ENCODE measurements at regions of chr7 and their contacts with region 1.

Region 1: DNA sequence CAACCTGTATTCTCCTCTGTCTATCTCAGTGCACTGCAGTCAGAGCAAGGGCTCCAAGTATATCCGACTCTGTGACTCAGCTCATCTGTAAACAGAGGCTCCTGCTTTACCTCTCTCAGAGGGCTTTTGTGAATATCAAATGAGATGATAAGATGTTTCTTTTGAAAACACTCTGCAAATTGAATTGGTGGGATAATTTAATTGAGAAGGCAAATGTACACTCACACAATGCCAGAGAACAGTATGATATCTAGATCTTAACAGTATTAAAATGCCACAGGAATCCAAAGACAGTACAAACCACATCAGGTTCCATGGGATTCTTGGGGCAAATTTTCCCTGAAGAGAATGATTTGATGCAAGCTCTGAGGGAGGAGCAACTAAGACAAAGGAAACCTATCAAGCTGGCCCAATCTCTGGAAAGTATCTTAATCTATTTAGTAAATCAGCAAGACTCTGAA is 46.0 kb downstream of the DOCK4 start:
- DNase-seq: peak; percentile 57
- ATAC-seq: peak; percentile 77
- H3K4me3 ChIP-seq: peak overlapping the region; percentile 15 to 37 (median 24); a peak in 3 of 6 replicates
- H3K27ac ChIP-seq: peak overlapping the region; percentile 36
- H3K4me1 ChIP-seq: peaks cover 43% of the 10 kb centered on the region
- H3K27me3 ChIP-seq: no peaks in the 10 kb centered on the region
- CTCF ChIP-seq: no peak
- EP300 ChIP-seq: no peak
- POLR2A ChIP-seq: no peak
- RAD21 ChIP-seq: no peak

Region 2: GRCh38 chr7:111953611-111954010 is 206.5 kb before region 1 on chr7:
- CTCF ChIA-PET with region 1: no interaction called
- POLR2A ChIA-PET with region 1: no interaction called
- in situ Hi-C with region 1: no loop called
- intact Hi-C with region 1: loop called (anchors 1 kb)
- DNase-seq: peak; percentile 77
- ATAC-seq: peak; percentile 98
- H3K4me3 ChIP-seq: no peak overlapping the region
- H3K27ac ChIP-seq: no peak overlapping the region
- H3K4me1 ChIP-seq: peaks cover 16% of the 10 kb centered on the region
- H3K27me3 ChIP-seq: no peaks in the 10 kb centered on the region
- CTCF ChIP-seq: peak; percentile 73
- EP300 ChIP-seq: no peak
- POLR2A ChIP-seq: no peak
- RAD21 ChIP-seq: no peak

Region 3: DNA sequence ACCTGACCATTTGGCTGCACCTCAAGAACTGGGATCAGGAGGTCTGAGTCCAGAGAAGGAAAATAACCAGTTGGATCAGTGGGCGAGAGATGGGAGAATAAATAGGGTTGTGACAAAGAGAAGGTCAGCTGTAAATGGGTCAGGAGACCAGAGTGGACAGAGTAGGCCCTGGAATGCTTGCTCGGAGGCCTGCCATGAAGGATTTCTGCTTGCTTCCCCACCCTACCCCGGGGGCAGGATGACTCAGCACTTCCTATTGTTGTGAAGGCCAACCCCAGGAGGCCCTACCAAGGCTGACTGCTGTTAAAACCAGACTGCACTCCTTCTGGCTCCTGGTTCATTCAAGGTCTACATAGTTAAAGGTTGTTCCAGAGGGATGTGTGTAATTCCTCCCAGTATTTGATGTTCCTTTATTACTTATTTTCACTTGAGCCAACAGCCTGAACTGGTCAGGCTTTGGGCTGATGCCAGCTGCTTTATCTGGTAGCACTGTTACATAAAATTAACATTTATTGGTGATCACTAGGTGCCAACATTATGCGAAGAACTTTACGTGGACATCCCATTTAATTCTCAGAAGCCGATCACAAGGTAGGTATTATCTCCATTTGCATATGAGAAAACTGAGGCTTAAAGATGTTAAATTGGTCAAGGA is 262.8 kb after region 1 on chr7:
- CTCF ChIA-PET with region 1: no interaction called
- POLR2A ChIA-PET with region 1: no interaction called
- in situ Hi-C with region 1: no loop called
- intact Hi-C with region 1: no loop called
- DNase-seq: peak; percentile 89
- ATAC-seq: peak; percentile 95
- H3K4me3 ChIP-seq: peak overlapping the region in 1 of 3 experiments; percentile 24; a peak in 2 of 6 replicates
- H3K27ac ChIP-seq: peak overlapping the region; percentile 63
- H3K4me1 ChIP-seq: peaks cover 65% of the 10 kb centered on the region
- H3K27me3 ChIP-seq: no peaks in the 10 kb centered on the region
- CTCF ChIP-seq: no peak
- EP300 ChIP-seq: peak in 1 of 2 experiments; percentile 71; a peak in 3 of 4 replicates
- POLR2A ChIP-seq: 0 out of 4 replicates have a peak, but pooled peaks of 1 of the 2 experiments have one; percentile 34
- RAD21 ChIP-seq: no peak

Region 4: GRCh38 chr7:112515989-112516388 is 355.8 kb after region 1 on chr7:
- CTCF ChIA-PET with region 1: no interaction called
- POLR2A ChIA-PET with region 1: no interaction called
- in situ Hi-C with region 1: no loop called
- intact Hi-C with region 1: no loop called
- DNase-seq: no peak
- ATAC-seq: peak; percentile 43; the same call in 1 of the 3 replicates
- H3K4me3 ChIP-seq: no peak overlapping the region
- H3K27ac ChIP-seq: no peak overlapping the region
- H3K4me1 ChIP-seq: no peaks in the 10 kb centered on the region
- H3K27me3 ChIP-seq: peaks cover 1 to 55% of the 10 kb centered on the region in 2 experiments; a peak in 3 of 5 replicates
- CTCF ChIP-seq: no peak
- EP300 ChIP-seq: no peak
- POLR2A ChIP-seq: no peak
- RAD21 ChIP-seq: no peak